Left cardiac atrium (tissue), 4 donors: ENCODE measurements at regions of chr4 and their contacts with region 1.

Region 1: DNA sequence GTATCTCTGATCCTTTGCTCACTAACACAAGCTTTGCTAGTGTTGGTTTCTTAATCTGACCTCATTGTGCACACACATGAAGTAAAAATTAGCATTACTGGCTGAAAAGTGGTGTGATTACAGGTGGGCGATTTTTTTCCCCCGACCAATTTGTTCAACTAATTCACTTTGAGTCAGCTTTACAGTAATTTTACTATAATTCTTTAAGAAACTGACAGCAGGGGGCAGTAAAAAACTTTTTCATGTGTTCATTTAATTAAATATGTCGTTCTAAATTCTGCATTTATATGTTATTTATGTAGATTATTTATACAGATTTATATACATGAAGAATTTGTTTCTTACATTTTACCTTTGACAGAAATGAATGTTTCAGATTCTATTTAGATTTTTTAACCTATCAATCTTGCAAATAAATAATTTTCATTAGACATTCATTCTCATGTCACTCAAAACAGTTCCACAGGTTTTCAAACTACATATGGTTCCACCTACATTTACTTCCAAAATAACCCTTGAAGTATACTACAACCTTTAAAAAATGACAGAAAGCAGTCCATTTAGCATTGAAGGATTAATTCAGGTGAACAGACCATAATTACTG is 17.5 kb downstream of the PALLD start:
- DNase-seq: no peak
- ATAC-seq: no peak

Region 2: DNA sequence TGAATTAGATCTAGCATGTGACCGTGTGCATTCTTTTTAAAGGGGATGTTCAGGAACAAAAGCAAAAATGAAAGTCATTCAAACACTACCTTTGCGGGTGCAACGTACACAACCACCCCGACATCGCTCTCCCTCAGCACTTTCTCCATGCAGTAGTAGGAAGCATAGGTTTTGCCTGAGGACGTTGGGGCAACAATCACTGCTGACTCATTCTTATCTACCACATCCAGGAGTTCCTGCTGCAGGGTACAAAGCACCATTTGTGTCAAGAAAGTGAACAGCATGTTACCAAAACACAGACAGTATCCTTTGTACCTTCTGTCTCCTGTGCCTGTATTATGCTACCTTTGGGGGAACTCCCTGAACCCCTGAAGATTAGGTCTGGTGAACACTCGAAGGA is 92.7 kb before region 1 on chr4:
- intact Hi-C with region 1: no loop called
- DNase-seq: no peak
- ATAC-seq: peak in 1 of 2 donors; percentile 42

Region 3: GRCh38 chr4:168585168-168586091 is 71.1 kb after region 1 on chr4:
- intact Hi-C with region 1: loop called in 1 of 2 experiments (anchors 10 kb)
- DNase-seq: peak; percentile 87
- ATAC-seq: peak; percentile 79 to 91